A673 (cell line): ENCODE measurements at regions of chr20 and their contacts with region 1.

Region 1: DNA sequence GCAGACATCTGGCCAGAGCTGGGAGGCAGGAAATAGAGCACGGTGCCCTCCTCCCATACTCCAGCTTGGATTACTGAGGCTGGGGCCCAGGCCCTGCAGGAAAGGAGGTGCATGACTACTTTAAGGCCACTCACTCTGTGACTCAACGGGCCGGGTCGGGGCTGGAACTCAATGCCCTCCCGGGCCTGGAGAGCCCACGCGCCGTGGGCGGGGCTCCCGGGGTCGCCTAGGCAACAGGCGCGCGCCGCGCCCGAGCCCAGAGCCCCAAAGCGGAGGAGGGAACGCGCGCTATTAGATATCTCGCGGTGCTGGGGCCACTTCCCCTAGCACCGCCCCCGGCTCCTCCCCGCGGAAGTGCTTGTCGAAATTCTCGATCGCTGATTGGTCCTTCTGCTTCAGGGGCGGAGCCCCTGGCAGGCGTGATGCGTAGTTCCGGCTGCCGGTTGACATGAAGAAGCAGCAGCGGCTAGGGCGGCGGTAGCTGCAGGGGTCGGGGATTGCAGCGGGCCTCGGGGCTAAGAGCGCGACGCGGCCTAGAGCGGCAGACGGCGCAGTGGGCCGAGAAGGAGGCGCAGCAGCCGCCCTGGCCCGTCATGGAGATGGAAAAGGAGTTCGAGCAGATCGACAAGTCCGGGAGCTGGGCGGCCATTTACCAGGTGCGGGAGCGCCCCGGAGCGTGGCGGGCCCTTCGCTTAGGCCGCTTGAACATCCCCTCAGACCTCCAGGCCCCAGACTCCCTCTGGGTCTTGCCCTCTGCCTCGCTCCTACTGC is at the start of gene PTPN1:
- DNase-seq: peak; percentile 99
- H3K4me3 ChIP-seq: peak within 1 kb of the TSS; percentile 92
- H3K27ac ChIP-seq: peak within 1 kb of the TSS; percentile 90
- H3K4me1 ChIP-seq: peaks cover 34% of the 10 kb centered on the region
- H3K27me3 ChIP-seq: no peaks in the 10 kb centered on the region
- CTCF ChIP-seq: no peak
- total RNA-seq, gene PTPN1: 47.4 and 47.8 TPM in 2 replicates

Region 2: DNA sequence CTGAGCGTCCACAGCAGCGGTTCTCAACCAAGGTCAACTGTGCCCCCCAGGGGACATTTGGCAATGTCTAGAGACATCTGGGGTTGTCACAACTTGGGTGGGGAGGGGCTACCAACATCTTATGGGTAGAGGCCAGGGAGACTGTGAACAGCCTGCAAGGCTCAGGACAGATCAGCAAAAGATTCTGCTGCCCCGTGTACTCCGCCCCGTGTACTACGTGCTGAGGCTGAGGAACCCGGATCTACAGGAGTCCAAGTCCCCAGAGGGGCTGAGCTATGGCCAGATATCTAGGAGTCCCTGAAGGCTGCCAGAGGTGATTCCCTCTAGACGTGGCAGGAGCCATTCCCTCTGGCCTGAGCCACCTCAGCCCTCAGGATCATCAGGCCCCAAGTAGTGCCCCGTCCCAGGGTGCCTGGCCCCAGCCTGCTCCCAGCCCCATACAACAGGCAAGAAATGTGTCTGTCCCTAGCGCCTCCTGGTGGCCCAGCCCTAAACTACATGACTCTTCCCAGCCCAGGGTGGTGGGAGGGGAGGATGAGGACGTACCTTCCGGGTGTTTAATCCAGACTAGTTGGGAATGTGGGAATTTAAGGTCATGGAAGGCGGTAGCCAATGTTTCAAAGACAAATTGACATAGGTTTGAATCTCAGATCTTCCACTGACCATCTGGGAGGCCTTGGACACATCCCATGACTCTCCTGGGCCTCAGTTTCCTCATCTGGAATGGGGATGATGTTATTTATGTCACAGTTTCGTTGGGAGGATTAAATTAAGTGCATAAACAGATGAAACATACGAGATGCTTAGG is 49.5 kb before region 1 on chr20:
- CTCF ChIA-PET with region 1: no interaction called
- POLR2A ChIA-PET with region 1: no interaction called
- intact Hi-C with region 1: no loop called
- DNase-seq: peak; percentile 88
- H3K4me3 ChIP-seq: no peak overlapping the region
- H3K27ac ChIP-seq: no peak overlapping the region
- H3K4me1 ChIP-seq: peaks cover 19% of the 10 kb centered on the region
- H3K27me3 ChIP-seq: no peaks in the 10 kb centered on the region
- CTCF ChIP-seq: peak; percentile 93

Region 3: GRCh38 chr20:50569864-50570836 is 60.0 kb after region 1 on chr20:
- CTCF ChIA-PET with region 1: no interaction called
- POLR2A ChIA-PET with region 1: interaction called, 4 read pairs
- intact Hi-C with region 1: loop called (anchors 5 kb)
- DNase-seq: peak; percentile 56
- H3K4me3 ChIP-seq: no peak overlapping the region
- H3K27ac ChIP-seq: peak overlapping the region; percentile 71
- H3K4me1 ChIP-seq: peaks cover 39% of the 10 kb centered on the region
- H3K27me3 ChIP-seq: no peaks in the 10 kb centered on the region
- CTCF ChIP-seq: peak; percentile 49